ENCODE measurements at regions of chr14 and their contacts with region 1.

Region 1: GRCh38 chr14:60184146-60184904 is 19.1 kb upstream of the DHRS7 start:
- DNase-seq: peak in 3 of 9 experiments; percentile 34 to 87 (median 81)
- ATAC-seq: peak; percentile 85
- H3K4me3 ChIP-seq: peak overlapping the region; percentile 37 to 44
- H3K4me3 Mint-ChIP-seq: peak overlapping the region; percentile 74
- H3K27ac ChIP-seq: peak overlapping the region; percentile 50 to 88
- H3K27ac Mint-ChIP-seq: peak overlapping the region; percentile 86
- H3K4me1 ChIP-seq: peaks cover 4% of the 10 kb centered on the region
- H3K4me1 Mint-ChIP-seq: peaks cover 10% of the 10 kb centered on the region
- H3K27me3 ChIP-seq: no peaks in the 10 kb centered on the region
- H3K27me3 Mint-ChIP-seq: no peaks in the 10 kb centered on the region
- CTCF ChIP-seq: peak; percentile 90

Region 2: DNA sequence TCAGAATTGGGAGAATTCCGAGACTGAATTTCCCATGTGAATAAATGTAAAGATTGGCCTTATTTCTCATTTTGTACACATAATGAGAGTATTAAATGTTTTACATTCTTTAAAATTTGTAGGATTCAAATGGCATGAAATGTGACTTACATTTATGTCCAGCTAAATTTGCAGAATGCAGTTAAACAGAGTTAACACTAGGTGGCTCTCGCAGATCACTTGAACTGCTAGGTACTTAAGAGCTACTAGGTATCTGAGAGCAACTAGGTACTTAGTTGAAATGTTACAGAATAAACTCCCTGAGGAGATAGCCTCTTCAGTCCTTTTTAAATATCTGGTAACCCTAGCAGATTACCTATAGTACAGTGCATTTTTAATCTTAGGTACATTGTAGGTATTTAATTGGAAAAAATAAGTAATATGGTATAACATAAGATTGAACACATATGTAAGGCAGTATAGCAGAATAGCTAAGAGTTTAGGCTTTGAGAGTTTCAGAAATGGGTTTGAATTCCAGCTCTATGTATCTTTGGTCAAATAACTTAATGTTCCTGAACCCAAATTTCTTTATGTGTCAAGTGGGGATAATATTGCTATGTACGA is 1683.0 kb before region 1 on chr14:
- CTCF ChIA-PET with region 1: no interaction called
- POLR2A ChIA-PET with region 1: no interaction called
- intact Hi-C with region 1: loop called in 1 of 2 experiments (anchors 5 kb)
- DNase-seq: peak in 3 of 9 experiments; percentile 7 to 63 (median 46)
- ATAC-seq: peak; percentile 67
- H3K4me3 ChIP-seq: no peak overlapping the region
- H3K4me3 Mint-ChIP-seq: no peak overlapping the region
- H3K27ac ChIP-seq: no peak overlapping the region
- H3K27ac Mint-ChIP-seq: no peak overlapping the region
- H3K4me1 ChIP-seq: no peaks in the 10 kb centered on the region
- H3K4me1 Mint-ChIP-seq: no peaks in the 10 kb centered on the region
- H3K27me3 ChIP-seq: no peaks in the 10 kb centered on the region
- H3K27me3 Mint-ChIP-seq: no peaks in the 10 kb centered on the region
- CTCF ChIP-seq: peak; percentile 81

Region 3: GRCh38 chr14:59189786-59190771 is 994.2 kb before region 1 on chr14:
- CTCF ChIA-PET with region 1: no interaction called
- POLR2A ChIA-PET with region 1: no interaction called
- intact Hi-C with region 1: loop called in 1 of 2 experiments (anchors 5 kb)
- DNase-seq: peak; percentile 37 to 87 (median 66)
- ATAC-seq: no peak
- H3K4me3 ChIP-seq: peak overlapping the region; percentile 63 to 94
- H3K4me3 Mint-ChIP-seq: peak overlapping the region; percentile 98
- H3K27ac ChIP-seq: peak overlapping the region; percentile 76 to 87
- H3K27ac Mint-ChIP-seq: peak overlapping the region; percentile 98
- H3K4me1 ChIP-seq: peaks cover 14% of the 10 kb centered on the region
- H3K4me1 Mint-ChIP-seq: peaks cover 17% of the 10 kb centered on the region
- H3K27me3 ChIP-seq: no peaks in the 10 kb centered on the region
- H3K27me3 Mint-ChIP-seq: no peaks in the 10 kb centered on the region
- CTCF ChIP-seq: no peak

Region 4: GRCh38 chr14:59632381-59632780 is 551.9 kb before region 1 on chr14:
- CTCF ChIA-PET with region 1: no interaction called
- POLR2A ChIA-PET with region 1: no interaction called
- intact Hi-C with region 1: loop called (anchors 5 kb)
- DNase-seq: peak in 2 of 9 experiments; percentile 7 to 20
- ATAC-seq: no peak
- H3K4me3 ChIP-seq: no peak overlapping the region
- H3K4me3 Mint-ChIP-seq: no peak overlapping the region
- H3K27ac ChIP-seq: no peak overlapping the region
- H3K27ac Mint-ChIP-seq: no peak overlapping the region
- H3K4me1 ChIP-seq: no peaks in the 10 kb centered on the region
- H3K4me1 Mint-ChIP-seq: no peaks in the 10 kb centered on the region
- H3K27me3 ChIP-seq: no peaks in the 10 kb centered on the region
- H3K27me3 Mint-ChIP-seq: peaks cover 43% of the 10 kb centered on the region
- CTCF ChIP-seq: no peak

Region 5: DNA sequence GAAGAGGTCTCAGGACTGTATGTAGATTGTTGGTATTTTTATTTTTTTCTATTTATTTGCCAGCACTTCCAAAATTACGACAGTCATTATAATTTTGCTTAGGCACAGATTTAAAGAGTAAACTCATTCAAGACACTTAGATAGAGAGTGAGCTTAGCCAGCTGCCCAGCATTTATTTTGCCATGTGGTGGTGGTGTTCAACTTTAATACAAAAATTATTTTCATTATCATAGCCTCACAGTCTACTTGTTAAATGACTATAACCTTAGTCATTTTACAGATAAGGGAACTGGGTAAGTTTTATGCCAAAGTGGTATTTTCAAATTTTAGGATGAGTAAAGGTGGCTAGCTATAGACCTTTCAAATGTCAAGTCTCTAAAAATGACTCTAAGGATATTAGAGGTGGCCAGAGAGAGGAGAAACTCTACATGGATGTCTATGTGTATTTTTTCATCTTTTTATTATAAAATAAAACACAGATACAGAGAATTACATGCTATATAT is 197.7 kb before region 1 on chr14:
- CTCF ChIA-PET with region 1: no interaction called
- POLR2A ChIA-PET with region 1: no interaction called
- intact Hi-C with region 1: no loop called
- DNase-seq: no peak
- ATAC-seq: no peak
- H3K4me3 ChIP-seq: no peak overlapping the region
- H3K4me3 Mint-ChIP-seq: no peak overlapping the region
- H3K27ac ChIP-seq: no peak overlapping the region
- H3K27ac Mint-ChIP-seq: no peak overlapping the region
- H3K4me1 ChIP-seq: no peaks in the 10 kb centered on the region
- H3K4me1 Mint-ChIP-seq: no peaks in the 10 kb centered on the region
- H3K27me3 ChIP-seq: no peaks in the 10 kb centered on the region
- H3K27me3 Mint-ChIP-seq: peaks cover 7% of the 10 kb centered on the region
- CTCF ChIP-seq: no peak

Region 6: DNA sequence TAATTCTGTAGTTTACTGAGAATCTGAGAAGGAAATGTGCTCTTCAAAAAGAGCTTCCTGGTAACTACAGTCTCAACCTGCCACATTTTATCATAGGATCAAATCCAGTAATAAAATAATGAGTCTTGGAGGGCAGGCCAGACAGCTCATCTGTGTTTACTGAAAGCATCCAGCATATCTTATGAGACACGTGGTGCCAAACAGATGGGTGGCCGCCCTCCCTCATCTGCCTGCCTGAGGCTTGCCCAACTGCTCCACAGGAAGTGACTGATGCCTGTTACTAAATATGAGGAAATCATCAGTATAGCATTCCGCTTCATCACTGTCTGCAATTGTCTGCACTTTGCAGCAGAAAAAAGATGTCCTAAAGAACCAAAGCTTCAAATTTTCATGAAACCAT is 32.6 kb before region 1 on chr14:
- CTCF ChIA-PET with region 1: interaction called, 13 read pairs
- POLR2A ChIA-PET with region 1: interaction called, 3 read pairs
- intact Hi-C with region 1: no loop called
- DNase-seq: peak; percentile 31 to 87 (median 74)
- ATAC-seq: peak; percentile 97
- H3K4me3 ChIP-seq: no peak overlapping the region
- H3K4me3 Mint-ChIP-seq: no peak overlapping the region
- H3K27ac ChIP-seq: peak overlapping the region; percentile 28 to 87
- H3K27ac Mint-ChIP-seq: peak overlapping the region; percentile 93
- H3K4me1 ChIP-seq: peaks cover 39% of the 10 kb centered on the region
- H3K4me1 Mint-ChIP-seq: peaks cover 54% of the 10 kb centered on the region
- H3K27me3 ChIP-seq: no peaks in the 10 kb centered on the region
- H3K27me3 Mint-ChIP-seq: no peaks in the 10 kb centered on the region
- CTCF ChIP-seq: no peak

Region 7: GRCh38 chr14:60221457-60221856 is 37.1 kb after region 1 on chr14:
- CTCF ChIA-PET with region 1: no interaction called
- POLR2A ChIA-PET with region 1: no interaction called
- intact Hi-C with region 1: no loop called
- DNase-seq: no peak
- ATAC-seq: no peak
- H3K4me3 ChIP-seq: no peak overlapping the region
- H3K4me3 Mint-ChIP-seq: no peak overlapping the region
- H3K27ac ChIP-seq: no peak overlapping the region
- H3K27ac Mint-ChIP-seq: no peak overlapping the region
- H3K4me1 ChIP-seq: no peaks in the 10 kb centered on the region
- H3K4me1 Mint-ChIP-seq: no peaks in the 10 kb centered on the region
- H3K27me3 ChIP-seq: no peaks in the 10 kb centered on the region
- H3K27me3 Mint-ChIP-seq: no peaks in the 10 kb centered on the region
- CTCF ChIP-seq: no peak

Region 8: GRCh38 chr14:60248697-60249318 is 64.5 kb after region 1 on chr14 and contains the start of gene PPM1A:
- CTCF ChIA-PET with region 1: interaction called, 5 read pairs
- POLR2A ChIA-PET with region 1: interaction called, 19 read pairs
- intact Hi-C with region 1: loop called (anchors 1 to 5 kb)
- DNase-seq: peak; percentile 93 to 99 (median 96)
- ATAC-seq: peak; percentile 76
- H3K4me3 ChIP-seq: peak within 1 kb of the TSS; percentile 92
- H3K4me3 Mint-ChIP-seq: peak within 1 kb of the TSS; percentile 93
- H3K27ac ChIP-seq: peak within 1 kb of the TSS; percentile 99 to 100
- H3K27ac Mint-ChIP-seq: peak within 1 kb of the TSS; percentile 100
- H3K4me1 ChIP-seq: peaks cover 41% of the 10 kb centered on the region
- H3K4me1 Mint-ChIP-seq: peaks cover 48% of the 10 kb centered on the region
- H3K27me3 ChIP-seq: no peaks in the 10 kb centered on the region
- H3K27me3 Mint-ChIP-seq: no peaks in the 10 kb centered on the region
- CTCF ChIP-seq: no peak
- total RNA-seq, gene PPM1A: 114 to 115 TPM

Region 9: GRCh38 chr14:60363275-60363674 is 178.9 kb after region 1 on chr14:
- CTCF ChIA-PET with region 1: no interaction called
- POLR2A ChIA-PET with region 1: no interaction called
- intact Hi-C with region 1: no loop called
- DNase-seq: no peak
- ATAC-seq: no peak
- H3K4me3 ChIP-seq: no peak overlapping the region
- H3K4me3 Mint-ChIP-seq: no peak overlapping the region
- H3K27ac ChIP-seq: no peak overlapping the region
- H3K27ac Mint-ChIP-seq: no peak overlapping the region
- H3K4me1 ChIP-seq: no peaks in the 10 kb centered on the region
- H3K4me1 Mint-ChIP-seq: no peaks in the 10 kb centered on the region
- H3K27me3 ChIP-seq: no peaks in the 10 kb centered on the region
- H3K27me3 Mint-ChIP-seq: peaks cover 13% of the 10 kb centered on the region
- CTCF ChIP-seq: no peak

Measured in CD8-positive, alpha-beta T cell (primary cell).